HAP-1 (cell line): ENCODE measurements at regions of chr10 and their contacts with region 1.

Region 1: DNA sequence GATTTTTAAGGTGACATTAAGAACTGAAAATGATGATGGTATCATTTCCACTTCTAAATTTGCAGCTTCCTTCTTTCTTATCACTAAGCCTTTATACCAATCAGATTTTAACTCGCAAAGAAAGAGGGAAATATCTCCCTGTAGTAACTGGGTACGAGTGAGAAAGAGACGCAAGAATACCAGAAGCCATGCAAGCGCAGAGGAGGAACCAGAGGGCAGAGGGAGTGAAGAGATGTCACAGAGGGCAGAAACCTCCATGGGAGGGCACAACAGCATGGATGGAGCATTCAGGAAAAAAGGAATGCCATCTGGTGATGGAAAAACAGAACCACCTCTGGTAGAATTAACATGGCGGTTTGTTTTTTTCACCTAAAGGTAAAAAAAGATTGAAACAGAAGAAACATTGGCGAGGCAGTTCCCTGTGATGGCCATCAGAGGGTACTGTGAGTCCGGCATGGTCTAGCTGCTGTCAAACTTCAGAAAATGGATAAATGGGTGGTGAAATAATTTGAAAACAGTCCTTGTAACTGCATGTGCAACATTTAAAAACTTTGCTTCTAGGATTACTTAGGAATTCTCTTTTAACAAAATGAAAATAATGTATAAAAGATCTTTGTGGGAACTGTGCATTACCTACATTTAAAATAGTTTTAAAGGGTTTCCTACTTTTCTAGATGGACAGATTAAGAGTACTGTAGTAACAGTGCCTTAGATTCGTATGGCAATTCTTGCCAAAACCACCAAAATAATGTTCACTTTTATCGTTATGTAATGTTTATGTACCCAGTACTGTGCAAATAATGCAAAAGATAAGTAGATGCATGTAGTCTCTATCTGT is 91.8 kb downstream of the ARHGAP12 start:
- DNase-seq: peak; percentile 20 to 43
- H3K4me3 ChIP-seq: no peak overlapping the region
- H3K4me1 ChIP-seq: no peaks in the 10 kb centered on the region
- H3K27me3 ChIP-seq: no peaks in the 10 kb centered on the region

Region 2: DNA sequence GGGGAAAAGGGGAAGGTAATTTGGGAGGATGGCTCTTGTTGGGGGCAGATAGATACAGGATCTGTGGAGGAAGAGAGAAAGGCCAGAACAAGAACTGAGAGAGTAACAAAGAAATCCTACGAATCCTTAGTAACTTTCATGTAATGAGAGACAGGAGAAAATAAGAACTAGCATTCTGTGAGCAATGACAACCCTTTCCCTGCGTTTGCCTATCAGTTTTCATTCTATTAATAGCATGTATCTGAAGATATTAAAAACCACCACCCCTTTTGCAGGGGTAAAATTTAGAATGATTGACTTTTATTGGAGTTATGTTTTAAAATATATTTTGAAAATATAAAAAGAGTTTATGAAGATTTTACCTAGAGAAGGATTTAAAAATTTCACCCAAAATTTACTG is 385.0 kb before region 1 on chr10:
- in situ Hi-C with region 1: no loop called
- DNase-seq: no peak
- H3K4me3 ChIP-seq: no peak overlapping the region
- H3K4me1 ChIP-seq: no peaks in the 10 kb centered on the region
- H3K27me3 ChIP-seq: no peaks in the 10 kb centered on the region

Region 3: DNA sequence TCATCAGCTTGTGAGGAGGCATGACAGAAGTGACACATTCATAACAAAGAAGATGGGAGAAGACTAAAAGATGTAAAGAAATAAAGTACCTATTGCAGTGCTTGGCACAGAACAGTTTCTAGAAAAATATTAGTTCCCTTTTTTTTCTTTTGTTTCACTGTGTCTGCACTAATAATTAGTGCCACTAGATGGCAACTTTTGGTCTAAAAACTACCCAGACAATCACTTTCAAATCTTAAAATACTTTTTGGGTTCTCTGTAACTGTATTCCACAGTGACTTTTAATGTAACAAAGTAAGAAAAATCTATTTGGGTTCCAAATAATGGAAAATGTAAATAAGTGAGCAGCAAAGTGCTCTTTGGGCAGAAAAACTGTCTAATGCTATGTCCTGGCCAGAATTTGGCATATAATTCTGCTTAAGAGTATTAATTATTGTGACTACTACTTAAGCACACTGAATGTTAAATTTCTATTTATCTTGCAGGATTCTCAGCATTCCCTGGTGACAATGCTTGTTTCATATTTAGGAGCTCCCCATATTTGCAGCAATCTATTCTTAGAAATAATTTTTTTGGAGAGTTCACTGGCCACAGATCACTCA is 354.2 kb after region 1 on chr10:
- in situ Hi-C with region 1: loop called (anchors 25 kb)
- DNase-seq: peak in 1 of 2 experiments; percentile 11
- H3K4me3 ChIP-seq: no peak overlapping the region
- H3K4me1 ChIP-seq: no peaks in the 10 kb centered on the region
- H3K27me3 ChIP-seq: no peaks in the 10 kb centered on the region; the same call in 1 of the 2 replicates